ENCODE measurements at regions of chr16 and their contacts with region 1.

Region 1: DNA sequence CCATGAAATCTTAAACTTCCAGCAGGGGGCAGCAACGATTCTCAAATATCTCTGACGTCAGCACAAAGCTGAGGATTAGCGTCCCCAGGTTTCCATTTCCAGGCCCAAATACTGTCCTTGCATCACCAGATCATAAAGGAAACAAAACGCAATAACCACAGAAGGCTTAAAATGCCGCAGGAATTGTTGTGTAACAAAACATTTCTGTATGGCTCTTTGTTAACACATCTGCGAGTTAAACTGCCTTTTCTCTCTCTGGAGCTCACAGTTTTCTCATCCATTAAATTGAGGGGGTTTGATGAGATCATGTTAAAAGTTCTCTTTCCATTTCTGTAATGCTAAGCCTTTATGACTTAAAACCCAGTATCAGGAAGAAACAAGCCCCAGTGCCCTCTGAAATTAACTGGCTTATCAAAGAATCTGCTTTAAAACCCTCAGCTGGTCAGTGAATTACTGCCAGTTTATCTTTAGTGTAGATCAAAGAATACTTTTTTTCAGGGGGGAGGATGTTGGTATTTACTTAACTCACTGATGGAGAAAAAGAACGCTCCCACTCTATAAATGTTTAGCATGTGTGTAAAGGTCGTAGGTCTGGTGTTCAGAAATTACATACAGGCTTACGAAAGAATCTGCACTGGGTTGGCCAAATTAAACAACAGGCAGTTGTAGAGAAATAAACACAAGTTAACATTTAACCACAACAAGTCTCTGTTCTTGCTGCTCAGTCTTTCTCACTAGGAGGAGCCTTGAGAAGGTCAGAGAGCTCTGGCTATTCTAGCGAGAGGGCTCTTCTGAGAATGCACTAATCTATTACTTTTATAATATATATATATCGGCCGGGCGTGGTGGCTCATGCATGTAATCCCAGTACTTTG is 10.6 kb upstream of the TERF2 start:
- DNase-seq: no peak
- ATAC-seq: peak; percentile 56
- H3K4me3 Mint-ChIP-seq: no peak overlapping the region
- H3K27ac Mint-ChIP-seq: no peak overlapping the region
- H3K4me1 Mint-ChIP-seq: peaks cover 10% of the 10 kb centered on the region
- H3K27me3 Mint-ChIP-seq: no peaks in the 10 kb centered on the region
- CTCF ChIP-seq: no peak

Region 2: GRCh38 chr16:68884861-68885720 is 511.3 kb before region 1 on chr16:
- CTCF ChIA-PET with region 1: no interaction called
- POLR2A ChIA-PET with region 1: no interaction called
- intact Hi-C with region 1: no loop called
- DNase-seq: no peak
- ATAC-seq: no peak
- H3K4me3 Mint-ChIP-seq: no peak overlapping the region
- H3K27ac Mint-ChIP-seq: no peak overlapping the region
- H3K4me1 Mint-ChIP-seq: no peaks in the 10 kb centered on the region
- H3K27me3 Mint-ChIP-seq: no peaks in the 10 kb centered on the region
- CTCF ChIP-seq: no peak

Region 3: GRCh38 chr16:69424053-69424934 is 27.9 kb after region 1 on chr16 and contains the start of gene CYB5B:
- CTCF ChIA-PET with region 1: interaction called, 5 read pairs
- POLR2A ChIA-PET with region 1: interaction called, 4 read pairs
- intact Hi-C with region 1: loop called (anchors 2 kb)
- DNase-seq: peak; percentile 81
- ATAC-seq: peak; percentile 95
- H3K4me3 Mint-ChIP-seq: peak within 1 kb of the TSS; percentile 96
- H3K27ac Mint-ChIP-seq: peak within 1 kb of the TSS; percentile 91
- H3K4me1 Mint-ChIP-seq: peaks cover 24% of the 10 kb centered on the region
- H3K27me3 Mint-ChIP-seq: no peaks in the 10 kb centered on the region
- CTCF ChIP-seq: no peak
- total RNA-seq, gene CYB5B: 112 and 115 TPM in 2 replicates

Region 4: GRCh38 chr16:69644790-69645189 is 248.4 kb after region 1 on chr16:
- CTCF ChIA-PET with region 1: interaction called, 5 read pairs
- POLR2A ChIA-PET with region 1: no interaction called
- intact Hi-C with region 1: loop called (anchors 2 kb)
- DNase-seq: no peak
- ATAC-seq: no peak
- H3K4me3 Mint-ChIP-seq: no peak overlapping the region
- H3K27ac Mint-ChIP-seq: no peak overlapping the region
- H3K4me1 Mint-ChIP-seq: no peaks in the 10 kb centered on the region
- H3K27me3 Mint-ChIP-seq: no peaks in the 10 kb centered on the region
- CTCF ChIP-seq: no peak

Region 5: DNA sequence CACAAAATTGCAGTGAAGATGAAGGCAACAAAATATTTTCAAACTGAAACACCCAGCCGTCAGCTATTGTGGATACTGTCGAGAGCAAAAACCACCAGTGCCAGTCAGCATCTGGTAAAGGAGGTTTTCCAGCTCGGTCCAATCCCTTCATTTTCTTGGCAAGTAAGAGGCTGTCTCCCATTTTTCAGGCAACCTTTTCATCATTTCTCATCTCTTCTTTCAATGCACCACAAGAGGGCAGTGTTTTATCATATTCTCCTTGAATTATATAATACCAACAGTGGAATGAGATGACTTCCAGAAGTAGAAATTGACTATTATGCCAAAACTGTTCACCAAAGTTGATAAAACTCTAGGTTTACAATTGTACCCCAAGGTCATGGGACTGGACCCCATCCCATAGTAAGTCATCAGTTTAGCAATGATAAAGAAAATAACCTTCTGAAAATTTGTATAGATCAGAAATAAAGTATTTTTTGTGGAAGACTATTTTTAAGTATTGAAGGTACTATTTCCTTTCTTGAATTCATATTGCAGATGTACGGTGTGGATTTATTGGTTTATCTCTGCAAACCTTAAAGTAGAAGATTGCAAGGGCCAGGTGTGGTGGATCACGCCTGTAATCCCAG is 313.1 kb after region 1 on chr16:
- CTCF ChIA-PET with region 1: interaction called, 5 read pairs
- POLR2A ChIA-PET with region 1: no interaction called
- intact Hi-C with region 1: loop called (anchors 1 kb)
- DNase-seq: no peak
- ATAC-seq: no peak
- H3K4me3 Mint-ChIP-seq: no peak overlapping the region
- H3K27ac Mint-ChIP-seq: no peak overlapping the region
- H3K4me1 Mint-ChIP-seq: no peaks in the 10 kb centered on the region
- H3K27me3 Mint-ChIP-seq: no peaks in the 10 kb centered on the region
- CTCF ChIP-seq: peak; percentile 54

Region 6: DNA sequence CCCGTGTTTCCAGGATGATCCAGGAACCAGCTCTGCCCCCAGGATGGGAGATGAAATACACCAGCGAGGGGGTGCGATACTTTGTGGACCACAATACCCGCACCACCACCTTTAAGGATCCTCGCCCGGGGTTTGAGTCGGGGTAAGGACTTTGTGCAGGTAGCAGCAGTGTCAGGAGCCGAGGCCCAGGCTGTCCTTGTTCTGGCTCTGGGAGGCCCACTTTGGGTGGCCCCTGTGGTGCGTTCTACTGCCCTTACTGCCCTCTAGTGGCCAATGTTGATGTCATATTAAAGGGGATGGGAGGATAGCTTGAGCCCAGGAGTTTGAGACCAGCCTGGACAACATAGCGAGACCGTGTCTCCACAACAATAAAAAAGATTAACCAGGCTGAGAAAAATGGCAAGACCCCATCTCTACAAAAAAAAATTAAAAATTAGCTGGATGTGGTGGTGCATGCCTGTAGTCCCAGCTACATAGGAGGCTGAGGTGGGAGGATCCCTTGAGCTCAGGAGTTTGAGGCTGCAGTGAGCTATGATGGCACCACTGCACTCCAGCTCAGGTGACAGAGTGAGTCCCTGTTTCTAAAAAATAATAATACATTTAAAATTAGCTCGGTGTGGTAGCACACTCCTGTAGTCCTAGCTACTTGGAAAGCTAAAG is 533.8 kb after region 1 on chr16:
- CTCF ChIA-PET with region 1: no interaction called
- POLR2A ChIA-PET with region 1: no interaction called
- intact Hi-C with region 1: loop called (anchors 5 kb)
- DNase-seq: peak; percentile 27
- ATAC-seq: peak; percentile 56
- H3K4me3 Mint-ChIP-seq: no peak overlapping the region
- H3K27ac Mint-ChIP-seq: no peak overlapping the region
- H3K4me1 Mint-ChIP-seq: no peaks in the 10 kb centered on the region
- H3K27me3 Mint-ChIP-seq: no peaks in the 10 kb centered on the region
- CTCF ChIP-seq: no peak